Activated CD4-positive, alpha-beta memory T cell treated with anti-CD3 and anti-CD28 coated beads for 36 hours (primary cell): ENCODE measurements at regions of chr21 and their contacts with region 1.

Region 1: GRCh38 chr21:45820171-45821091 is 161.1 kb upstream of the COL6A1 start:
- DNase-seq: peak; percentile 86
- H3K4me3 Mint-ChIP-seq: no peak overlapping the region
- H3K27ac Mint-ChIP-seq: peak overlapping the region; percentile 56
- H3K4me1 Mint-ChIP-seq: peaks cover 47% of the 10 kb centered on the region
- H3K27me3 Mint-ChIP-seq: peaks cover 4% of the 10 kb centered on the region

Region 2: DNA sequence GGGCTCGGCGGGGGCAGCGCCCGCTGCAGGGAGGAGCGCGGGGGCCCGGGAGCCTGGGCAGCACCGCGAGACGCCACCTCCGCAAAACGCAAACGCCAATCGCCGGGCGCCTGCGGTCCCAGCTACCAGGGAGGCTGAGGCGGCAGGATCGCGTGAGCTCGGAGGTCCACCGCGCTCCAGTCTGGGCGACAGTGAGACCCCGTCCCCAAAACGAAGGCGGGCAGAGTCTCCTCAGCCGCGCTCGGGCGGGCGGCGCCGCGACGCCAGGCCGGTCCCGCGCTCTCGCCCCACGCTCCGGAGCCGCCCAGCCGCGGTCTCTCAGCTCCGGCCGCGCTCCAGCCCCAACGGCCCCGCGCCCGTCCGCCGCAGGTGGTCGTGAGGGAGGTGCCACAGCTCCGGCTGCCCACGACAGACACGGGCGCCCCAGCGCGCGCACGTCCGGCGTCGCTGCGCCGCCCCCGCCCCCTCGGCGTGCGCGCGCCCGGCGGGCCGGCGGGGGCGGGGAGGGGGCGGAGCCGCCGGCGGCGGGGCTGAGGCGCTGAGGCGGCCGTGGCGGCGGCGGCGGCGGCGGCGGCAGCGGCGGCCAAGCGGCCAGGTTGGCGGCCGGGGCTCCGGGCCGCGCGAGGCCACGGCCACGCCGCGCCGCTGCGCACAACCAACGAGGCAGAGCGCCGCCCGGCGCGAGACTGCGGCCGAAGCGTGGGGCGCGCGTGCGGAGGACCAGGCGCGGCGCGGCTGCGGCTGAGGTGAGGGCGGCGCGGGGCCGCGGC is 746.2 kb before region 1 on chr21 and contains the start of gene ADARB1:
- CTCF ChIA-PET with region 1: no interaction called
- POLR2A ChIA-PET with region 1: no interaction called
- intact Hi-C with region 1: loop called (anchors 5 kb)
- DNase-seq: peak; percentile 64
- H3K4me3 Mint-ChIP-seq: peak within 1 kb of the TSS; percentile 84
- H3K27ac Mint-ChIP-seq: peak within 1 kb of the TSS; percentile 75
- H3K4me1 Mint-ChIP-seq: peaks cover 43% of the 10 kb centered on the region
- H3K27me3 Mint-ChIP-seq: no peaks in the 10 kb centered on the region
- total RNA-seq, gene ADARB1: 37.6 to 40.6 TPM

Region 3: DNA sequence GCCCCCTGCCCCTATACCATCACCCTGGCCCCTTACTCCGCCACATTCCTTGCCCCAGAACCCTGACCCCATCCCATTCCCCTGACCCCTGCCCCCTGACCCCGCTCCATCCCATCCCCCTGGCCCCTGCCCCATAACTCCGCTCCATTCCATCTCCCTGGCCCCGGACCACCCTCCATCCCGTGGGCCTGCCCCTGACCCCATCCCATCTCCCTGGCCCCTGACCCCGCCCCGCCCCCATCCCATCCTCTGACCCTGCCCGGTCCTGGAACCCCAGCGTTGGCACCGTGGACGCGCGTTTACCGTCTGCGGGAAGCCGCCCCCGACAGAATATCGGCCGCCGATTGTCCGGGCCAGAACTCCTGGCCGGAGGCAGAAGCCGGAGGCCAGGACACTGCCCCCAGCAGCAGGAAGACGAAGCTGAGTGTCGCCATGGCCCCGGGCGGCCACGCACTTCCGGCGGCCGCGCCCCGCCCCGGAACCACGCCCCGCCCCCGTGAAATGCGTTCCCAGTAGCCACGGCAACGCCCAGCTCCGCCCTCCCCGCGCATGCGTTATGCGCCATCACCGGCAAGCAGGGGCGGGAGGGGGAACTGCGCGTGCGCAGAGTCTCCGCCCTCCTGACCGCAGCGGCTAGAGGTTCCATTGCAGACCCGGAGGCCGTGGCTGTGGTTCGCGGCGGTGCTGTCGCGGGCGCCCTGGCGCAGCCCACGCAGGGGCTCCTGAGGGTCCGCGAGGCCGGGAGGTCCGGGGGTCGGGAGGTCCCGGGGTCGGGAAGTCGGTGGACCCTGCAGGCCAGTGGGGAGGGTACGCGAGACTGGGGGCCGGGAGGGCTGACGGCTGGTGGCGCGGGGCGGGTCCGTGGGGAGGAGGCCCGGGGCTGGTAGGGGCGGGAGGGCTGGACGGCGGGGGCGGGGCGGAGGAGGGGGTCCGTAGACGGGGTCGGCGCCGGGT is 532.7 kb before region 1 on chr21 and contains the start of gene POFUT2:
- CTCF ChIA-PET with region 1: interaction called, 4 read pairs
- POLR2A ChIA-PET with region 1: interaction called, 3 read pairs
- intact Hi-C with region 1: loop called (anchors 1 kb)
- DNase-seq: peak; percentile 99
- H3K4me3 Mint-ChIP-seq: peak within 1 kb of the TSS; percentile 77
- H3K27ac Mint-ChIP-seq: peak within 1 kb of the TSS; percentile 69
- H3K4me1 Mint-ChIP-seq: peaks cover 24% of the 10 kb centered on the region
- H3K27me3 Mint-ChIP-seq: no peaks in the 10 kb centered on the region
- total RNA-seq, gene POFUT2: 14.3 TPM

Region 4: GRCh38 chr21:45554477-45555175 is 265.8 kb before region 1 on chr21:
- CTCF ChIA-PET with region 1: interaction called, 7 read pairs
- POLR2A ChIA-PET with region 1: no interaction called
- intact Hi-C with region 1: loop called (anchors 1 kb)
- DNase-seq: peak; percentile 87
- H3K4me3 Mint-ChIP-seq: peak overlapping the region; percentile 88
- H3K27ac Mint-ChIP-seq: peak overlapping the region; percentile 79
- H3K4me1 Mint-ChIP-seq: peaks cover 30% of the 10 kb centered on the region
- H3K27me3 Mint-ChIP-seq: peaks cover 5% of the 10 kb centered on the region

Region 5: DNA sequence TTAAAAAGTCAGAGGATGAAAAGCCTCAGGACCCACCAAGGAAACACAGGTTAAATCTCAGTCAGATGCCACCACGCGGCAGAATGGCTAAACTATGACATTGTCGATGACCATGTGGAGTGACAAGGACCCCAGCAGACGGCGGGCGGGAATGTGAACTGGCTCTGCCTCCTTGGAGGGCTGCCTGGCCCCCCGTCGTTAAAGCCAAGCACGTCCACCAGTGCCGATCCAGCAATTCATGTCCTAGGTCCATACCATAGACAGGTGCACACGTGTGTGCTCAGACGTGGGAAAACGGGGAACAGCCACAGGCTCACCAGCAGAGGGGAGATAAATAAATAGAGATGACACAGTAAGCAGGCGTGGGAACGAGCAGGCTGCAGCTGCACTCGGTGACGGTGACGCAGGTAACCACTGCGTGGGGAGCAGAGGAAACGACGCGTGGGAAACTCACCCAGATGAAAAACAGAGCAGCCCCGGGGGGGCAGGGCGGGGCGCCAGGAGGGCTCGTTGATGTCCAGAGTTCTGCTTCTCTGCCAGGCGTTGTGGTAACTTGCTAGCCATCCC is 205.2 kb before region 1 on chr21:
- CTCF ChIA-PET with region 1: no interaction called
- POLR2A ChIA-PET with region 1: no interaction called
- intact Hi-C with region 1: loop called (anchors 2 kb)
- DNase-seq: peak; percentile 90
- H3K4me3 Mint-ChIP-seq: peak overlapping the region; percentile 71
- H3K27ac Mint-ChIP-seq: peak overlapping the region; percentile 34
- H3K4me1 Mint-ChIP-seq: peaks cover 25% of the 10 kb centered on the region
- H3K27me3 Mint-ChIP-seq: no peaks in the 10 kb centered on the region

Region 6: DNA sequence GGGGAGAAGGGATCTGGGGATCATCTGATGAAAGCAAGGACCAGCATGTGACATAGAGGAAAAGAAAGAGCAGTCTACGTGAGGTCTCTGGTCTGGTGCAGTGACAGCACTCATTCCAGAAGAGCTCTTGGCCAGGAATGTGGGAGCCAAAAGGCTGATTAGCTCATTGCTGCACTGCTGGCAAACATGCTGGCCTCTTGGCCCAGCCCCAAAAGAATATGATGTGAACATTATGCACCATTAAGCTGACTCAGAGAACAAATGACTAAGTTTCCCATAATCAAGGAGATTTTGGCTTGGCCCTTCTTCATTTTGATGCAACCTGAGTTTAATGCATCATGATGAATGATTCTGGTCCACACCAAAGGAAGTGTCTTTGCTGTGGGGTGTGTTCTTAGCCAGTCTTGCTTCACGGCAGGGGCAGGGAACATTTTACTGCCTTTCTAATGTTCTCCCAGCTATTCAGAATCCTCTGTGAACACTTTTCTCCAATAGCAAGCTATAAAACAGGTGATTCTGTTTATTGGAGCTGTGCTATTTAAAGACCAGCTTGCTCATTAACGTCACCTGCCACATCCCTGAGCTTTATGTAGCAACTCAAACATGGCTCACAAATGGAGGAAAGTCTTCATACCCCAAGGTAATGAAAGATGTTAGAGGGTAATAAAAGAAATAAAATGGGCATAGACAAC is 121.8 kb before region 1 on chr21:
- CTCF ChIA-PET with region 1: no interaction called
- POLR2A ChIA-PET with region 1: interaction called, 3 read pairs
- intact Hi-C with region 1: loop called (anchors 2 kb)
- DNase-seq: peak; percentile 44
- H3K4me3 Mint-ChIP-seq: no peak overlapping the region
- H3K27ac Mint-ChIP-seq: peak overlapping the region; percentile 59
- H3K4me1 Mint-ChIP-seq: peaks cover 19% of the 10 kb centered on the region
- H3K27me3 Mint-ChIP-seq: no peaks in the 10 kb centered on the region

Region 7: GRCh38 chr21:45887120-45887611 is 66.7 kb after region 1 on chr21:
- CTCF ChIA-PET with region 1: no interaction called
- POLR2A ChIA-PET with region 1: no interaction called
- intact Hi-C with region 1: loop called (anchors 2 kb)
- DNase-seq: no peak
- H3K4me3 Mint-ChIP-seq: no peak overlapping the region
- H3K27ac Mint-ChIP-seq: peak overlapping the region; percentile 34
- H3K4me1 Mint-ChIP-seq: peaks cover 82% of the 10 kb centered on the region
- H3K27me3 Mint-ChIP-seq: no peaks in the 10 kb centered on the region